Activated naive CD4-positive, alpha-beta T cell treated with anti-CD3 and anti-CD28 coated beads for 36 hours (primary cell): ENCODE measurements at regions of chr21 and their contacts with region 1.

Region 1: DNA sequence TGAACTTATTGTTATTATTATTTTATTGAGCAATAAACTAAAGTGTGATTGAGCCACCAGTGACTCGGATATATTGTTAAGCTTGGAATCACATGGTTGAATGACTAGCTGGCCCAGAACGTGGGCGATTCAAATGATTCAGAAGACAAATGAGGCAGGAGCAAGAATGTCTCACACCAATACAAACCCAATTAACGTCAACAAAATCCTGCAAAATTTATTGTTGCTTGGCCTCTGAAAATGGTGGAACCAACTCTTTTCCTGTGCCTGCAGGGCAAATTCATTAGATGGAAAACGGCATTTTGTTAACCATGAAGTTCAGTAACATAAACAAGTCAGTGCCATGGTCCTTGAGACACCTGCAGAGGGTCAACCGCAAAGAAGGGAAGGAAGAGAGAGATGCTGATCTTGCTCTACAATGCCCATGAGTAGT is 482.0 kb downstream of the SETD4 start:
- DNase-seq: no peak
- H3K4me3 Mint-ChIP-seq: no peak overlapping the region
- H3K27ac Mint-ChIP-seq: no peak overlapping the region
- H3K4me1 Mint-ChIP-seq: peaks cover 26% of the 10 kb centered on the region
- H3K27me3 Mint-ChIP-seq: peaks cover 2% of the 10 kb centered on the region

Region 2: GRCh38 chr21:35349376-35350080 is 228.8 kb before region 1 on chr21:
- CTCF ChIA-PET with region 1: no interaction called
- intact Hi-C with region 1: loop called (anchors 5 kb)
- DNase-seq: no peak
- H3K4me3 Mint-ChIP-seq: no peak overlapping the region
- H3K27ac Mint-ChIP-seq: no peak overlapping the region
- H3K4me1 Mint-ChIP-seq: peaks cover 29% of the 10 kb centered on the region
- H3K27me3 Mint-ChIP-seq: peaks cover 4% of the 10 kb centered on the region

Region 3: DNA sequence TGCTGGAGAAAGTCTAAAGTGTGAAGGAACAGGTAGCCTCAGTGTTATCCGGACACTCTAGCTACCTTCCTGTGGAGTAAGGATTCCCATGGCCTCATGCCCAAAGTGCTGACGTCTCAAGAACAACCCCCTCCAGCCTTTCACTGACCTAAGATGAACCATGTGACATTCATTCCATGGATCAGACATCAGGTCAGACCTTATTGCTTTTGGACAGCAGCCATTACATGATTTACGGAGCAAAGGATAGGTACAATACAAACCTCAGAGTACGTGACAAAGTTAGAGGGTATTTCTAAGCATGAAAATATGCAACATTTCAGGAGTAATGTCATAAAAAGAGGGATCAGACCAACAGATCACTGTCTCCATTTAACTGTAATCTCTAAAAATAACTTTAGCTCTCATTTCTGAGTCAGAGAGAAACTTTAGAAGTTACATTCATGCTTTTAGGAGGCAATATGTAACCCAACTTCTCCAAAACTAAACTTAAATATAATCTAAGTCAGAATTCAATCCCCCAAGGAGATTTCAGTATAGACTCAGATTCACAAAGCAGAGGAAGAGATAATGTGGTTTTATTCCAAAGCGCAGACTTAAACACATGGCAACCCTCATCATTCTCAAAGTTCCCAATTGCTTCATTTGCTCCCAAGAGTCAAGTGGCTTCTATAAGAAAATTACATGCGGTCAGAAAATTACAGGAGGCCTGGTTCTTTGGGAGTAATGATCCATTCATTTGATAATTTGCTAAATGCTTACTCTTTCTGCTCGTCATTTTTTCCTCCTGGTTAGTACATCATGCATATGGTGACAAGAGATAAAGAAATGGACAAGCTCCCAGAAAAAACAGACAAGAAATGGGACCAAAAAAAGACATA is 201.6 kb after region 1 on chr21:
- CTCF ChIA-PET with region 1: no interaction called
- intact Hi-C with region 1: no loop called
- DNase-seq: no peak
- H3K4me3 Mint-ChIP-seq: no peak overlapping the region
- H3K27ac Mint-ChIP-seq: no peak overlapping the region
- H3K4me1 Mint-ChIP-seq: peaks cover 1% of the 10 kb centered on the region
- H3K27me3 Mint-ChIP-seq: peaks cover 5% of the 10 kb centered on the region